Aorta (tissue), 5 donors: ENCODE measurements at regions of chr6 and their contacts with region 1.

Region 1: GRCh38 chr6:63635588-63636517 is at the start of gene PHF3:
- DNase-seq: peak; percentile 93 to 95
- ATAC-seq: peak; percentile 97
- H3K4me3 ChIP-seq: peak within 1 kb of the TSS; percentile 94 to 96
- H3K27ac ChIP-seq: peak within 1 kb of the TSS; percentile 65 to 83
- H3K4me1 ChIP-seq: peaks cover 1 to 5% of the 10 kb centered on the region in 2 donors
- H3K27me3 ChIP-seq: no peaks in the 10 kb centered on the region
- total RNA-seq, gene PHF3: 52.1 to 69.2 TPM

Region 2: GRCh38 chr6:63571881-63572732 is 63.7 kb before region 1 on chr6 and contains the starts of genes LOC128125822 and PTP4A1:
- intact Hi-C with region 1: loop called (anchors 2 to 10 kb)
- DNase-seq: peak; percentile 99
- ATAC-seq: peak; percentile 99
- H3K4me3 ChIP-seq: peak within 1 kb of the TSS; percentile 76 to 90
- H3K27ac ChIP-seq: peak within 1 kb of the TSS; percentile 77 to 93
- H3K4me1 ChIP-seq: no peaks in the 10 kb centered on the region
- H3K27me3 ChIP-seq: no peaks in the 10 kb centered on the region
- total RNA-seq, gene PTP4A1: 27.0 to 34.3 TPM

Region 3: GRCh38 chr6:63685446-63686379 is 49.9 kb after region 1 on chr6:
- intact Hi-C with region 1: loop called in 1 of 2 experiments (anchors 10 kb)
- DNase-seq: no peak
- ATAC-seq: no peak
- H3K4me3 ChIP-seq: no peak overlapping the region
- H3K27ac ChIP-seq: no peak overlapping the region
- H3K4me1 ChIP-seq: no peaks in the 10 kb centered on the region
- H3K27me3 ChIP-seq: no peaks in the 10 kb centered on the region